Mammary epithelial cell (primary cell): ENCODE measurements at regions of chr15 and their contacts with region 1.

Region 1: GRCh38 chr15:76576523-76577279 is 240.1 kb downstream of the ISL2 start:
- DNase-seq: no peak
- H3K4me3 ChIP-seq: no peak overlapping the region
- H3K27ac ChIP-seq: no peak overlapping the region
- H3K4me1 ChIP-seq: no peaks in the 10 kb centered on the region
- H3K27me3 ChIP-seq: no peaks in the 10 kb centered on the region
- CTCF ChIP-seq: no peak

Region 2: GRCh38 chr15:76206325-76206976 is 370.2 kb before region 1 on chr15:
- CTCF ChIA-PET with region 1: no interaction called
- dilution Hi-C with region 1: loop called (anchors 10 kb)
- in situ Hi-C with region 1: no loop called
- intact Hi-C with region 1: no loop called
- DNase-seq: no peak
- H3K4me3 ChIP-seq: no peak overlapping the region
- H3K27ac ChIP-seq: no peak overlapping the region
- H3K4me1 ChIP-seq: no peaks in the 10 kb centered on the region
- H3K27me3 ChIP-seq: no peaks in the 10 kb centered on the region
- CTCF ChIP-seq: no peak

Region 3: DNA sequence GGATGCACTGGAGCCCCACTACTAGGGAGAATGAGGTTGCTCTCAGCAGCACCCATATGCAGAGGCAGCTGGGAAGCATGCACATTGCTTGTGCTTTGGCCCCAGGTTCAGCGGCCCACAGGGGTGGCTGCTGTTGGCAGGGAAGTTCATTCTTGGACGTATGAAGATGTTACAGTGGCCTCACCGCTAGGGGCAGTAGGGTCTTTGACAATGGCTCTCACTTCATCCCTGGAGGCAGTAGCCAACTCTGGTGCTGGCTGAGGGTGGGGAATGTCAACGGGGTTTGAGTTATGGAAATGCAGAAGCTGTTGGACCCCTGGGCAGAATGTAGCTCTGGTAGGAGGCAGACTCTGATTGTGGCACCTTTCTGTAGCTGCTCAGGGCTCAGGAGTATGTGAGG is 48.6 kb after region 1 on chr15:
- CTCF ChIA-PET with region 1: no interaction called
- dilution Hi-C with region 1: loop called (anchors 5 kb)
- in situ Hi-C with region 1: no loop called
- intact Hi-C with region 1: no loop called
- DNase-seq: no peak
- H3K4me3 ChIP-seq: no peak overlapping the region
- H3K27ac ChIP-seq: no peak overlapping the region
- H3K4me1 ChIP-seq: no peaks in the 10 kb centered on the region
- H3K27me3 ChIP-seq: no peaks in the 10 kb centered on the region
- CTCF ChIP-seq: peak in 1 of 2 donors; percentile 11

Region 4: DNA sequence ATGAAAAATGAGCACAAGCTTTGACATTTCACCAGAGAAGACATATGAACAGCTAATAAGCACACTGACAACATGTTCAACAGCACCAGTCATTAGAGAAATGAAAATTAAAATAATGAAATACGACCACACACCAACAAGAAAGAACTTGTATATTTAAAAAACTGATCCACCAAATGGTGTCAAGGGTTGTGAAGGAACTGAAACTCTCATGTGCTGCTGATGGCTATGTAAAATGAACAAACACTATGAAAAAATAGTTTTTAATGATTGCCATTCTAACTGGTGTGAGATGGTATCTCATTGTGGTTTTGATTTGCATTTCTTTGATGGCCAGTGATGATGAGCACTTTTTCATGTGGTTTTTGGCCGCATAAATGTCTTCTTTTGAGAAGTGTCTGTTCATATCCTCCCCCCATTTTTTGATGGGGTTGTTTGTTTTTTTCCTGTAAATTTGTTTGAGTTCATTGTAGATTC is 134.7 kb after region 1 on chr15:
- CTCF ChIA-PET with region 1: no interaction called
- dilution Hi-C with region 1: no loop called
- in situ Hi-C with region 1: no loop called
- intact Hi-C with region 1: no loop called
- DNase-seq: no peak
- H3K4me3 ChIP-seq: no peak overlapping the region
- H3K27ac ChIP-seq: no peak overlapping the region
- H3K4me1 ChIP-seq: no peaks in the 10 kb centered on the region
- H3K27me3 ChIP-seq: no peaks in the 10 kb centered on the region
- CTCF ChIP-seq: no peak